Cardiac septum (tissue), 1 donor: ENCODE measurements at regions of chr4 and their contacts with region 1.

Region 1: GRCh38 chr4:37970487-37971101 is 10.4 kb downstream of the PTTG2 start:
- DNase-seq: peak; percentile 92

Region 2: GRCh38 chr4:37908488-37909331 is 61.9 kb before region 1 on chr4:
- intact Hi-C with region 1: loop called (anchors 5 kb)
- DNase-seq: no peak